Heart right ventricle (tissue), 16 donors: ENCODE measurements at regions of chr20 and their contacts with region 1.

Region 1: GRCh38 chr20:53547664-53548239 is 45.9 kb downstream of the ZNF217 start:
- DNase-seq: peak in 1 of 2 donors; percentile 45
- ATAC-seq: peak in 7 of 8 donors; percentile 70 to 85 (median 80)
- H3K4me3 ChIP-seq: no peak overlapping the region
- H3K27ac ChIP-seq: no peak overlapping the region
- H3K4me1 ChIP-seq: peaks cover 0 to 10% (median 7%) of the 10 kb centered on the region in 9 donors
- H3K27me3 ChIP-seq: no peaks in the 10 kb centered on the region
- CTCF ChIP-seq: peak; percentile 61 to 90 (median 81)

Region 2: DNA sequence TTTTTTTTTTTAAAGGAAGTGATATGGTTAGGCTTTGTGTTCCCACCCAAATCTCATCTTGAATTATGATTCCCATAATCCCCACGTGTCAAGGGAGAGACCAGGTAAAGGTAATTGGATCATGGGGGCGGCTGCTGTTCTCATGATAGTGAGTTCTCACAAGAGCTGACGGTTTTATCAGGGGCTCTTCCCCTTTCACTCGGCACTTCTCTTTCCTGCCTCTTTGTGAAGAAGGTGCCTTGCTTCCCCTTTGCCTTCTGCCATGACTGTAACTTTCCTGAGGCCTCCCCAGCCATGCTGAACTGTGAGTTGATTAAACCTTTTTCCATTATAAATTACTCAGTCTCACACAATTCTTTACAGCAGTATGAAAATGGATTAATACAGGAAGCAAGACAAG is 1420.4 kb before region 1 on chr20:
- intact Hi-C with region 1: loop called in 1 of 10 experiments (anchors 10 kb)
- DNase-seq: no peak
- ATAC-seq: no peak
- H3K4me3 ChIP-seq: no peak overlapping the region
- H3K27ac ChIP-seq: no peak overlapping the region
- H3K4me1 ChIP-seq: no peaks in the 10 kb centered on the region
- H3K27me3 ChIP-seq: no peaks in the 10 kb centered on the region
- CTCF ChIP-seq: no peak

Region 3: DNA sequence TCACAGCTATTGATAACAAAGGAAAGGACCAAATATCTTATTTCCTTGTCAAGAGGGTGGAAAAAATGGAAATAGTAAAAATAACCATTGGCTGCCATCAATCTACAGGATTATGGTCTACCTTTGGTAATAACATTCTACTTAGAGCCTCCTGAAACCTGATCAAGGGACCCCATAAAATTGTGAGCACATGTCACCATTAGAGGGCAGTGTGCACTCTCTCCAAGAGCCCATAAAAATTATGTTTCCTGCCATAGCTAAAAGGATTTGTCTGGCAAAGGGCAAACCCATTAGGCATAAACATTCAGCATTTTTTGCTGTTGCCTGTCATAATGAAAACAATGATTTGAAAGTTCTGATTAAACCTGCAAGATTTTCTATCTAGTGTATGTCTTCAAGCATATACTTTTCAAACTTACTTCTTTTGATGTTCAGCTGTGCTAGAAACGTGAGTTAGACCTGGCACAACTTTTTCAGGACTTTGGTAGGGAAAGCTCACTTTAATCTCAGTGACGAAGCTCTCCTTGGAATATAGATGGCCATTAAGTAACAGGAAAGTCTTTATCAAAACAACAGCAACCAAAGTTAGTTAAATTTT is 1235.5 kb before region 1 on chr20:
- intact Hi-C with region 1: loop called in 9 of 10 experiments (anchors 2 to 10 kb)
- DNase-seq: peak in 1 of 2 donors; percentile 40
- ATAC-seq: peak in 6 of 8 donors; percentile 44 to 67 (median 60)
- H3K4me3 ChIP-seq: no peak overlapping the region
- H3K27ac ChIP-seq: no peak overlapping the region
- H3K4me1 ChIP-seq: peaks cover 0 to 12% (median 3%) of the 10 kb centered on the region in 9 donors
- H3K27me3 ChIP-seq: peaks cover 0 to 5% (median 0%) of the 10 kb centered on the region in 7 donors
- CTCF ChIP-seq: peak; percentile 41 to 85 (median 76)

Region 4: DNA sequence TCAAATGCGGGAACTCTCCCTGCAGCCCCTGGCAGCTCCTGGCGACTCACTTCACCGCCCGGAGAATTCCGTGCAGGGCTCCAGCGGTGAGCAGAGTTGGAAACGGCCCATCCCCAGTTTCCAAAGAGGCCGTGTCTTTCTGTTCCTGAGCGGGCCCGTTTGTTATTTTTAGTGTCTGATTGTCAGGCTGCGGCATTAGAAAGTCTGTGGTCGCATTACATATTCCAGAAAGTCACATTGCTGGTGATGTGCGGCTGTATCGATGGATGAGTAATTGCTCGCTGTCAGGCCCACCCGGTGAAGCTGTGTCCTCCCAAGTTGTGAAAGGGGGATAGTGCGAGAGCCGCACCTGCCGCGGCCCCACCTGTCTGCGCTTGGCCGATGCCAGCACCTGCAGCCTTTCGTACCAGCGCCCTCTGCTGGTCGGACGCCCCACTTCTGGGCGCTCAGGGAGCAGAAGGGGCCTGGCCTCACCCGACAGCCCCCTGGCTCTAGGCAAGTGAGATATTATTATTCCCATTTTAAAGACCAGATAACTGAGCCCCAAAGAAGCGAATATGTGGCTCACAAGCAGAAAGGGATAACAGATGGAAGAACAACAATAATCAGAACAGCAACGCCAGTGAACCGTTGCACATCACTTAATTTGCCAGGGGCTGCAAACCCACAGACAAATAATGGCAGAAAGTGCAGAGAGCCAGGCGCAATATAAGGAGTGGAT is 330.7 kb before region 1 on chr20:
- intact Hi-C with region 1: loop called in 2 of 10 experiments (anchors 10 kb)
- DNase-seq: peak; percentile 57 to 74
- ATAC-seq: peak; percentile 61 to 89 (median 79)
- H3K4me3 ChIP-seq: peak overlapping the region in 5 of 10 donors; percentile 17 to 39 (median 32)
- H3K27ac ChIP-seq: no peak overlapping the region
- H3K4me1 ChIP-seq: peaks cover 0 to 9% (median 6%) of the 10 kb centered on the region in 9 donors
- H3K27me3 ChIP-seq: peaks cover 0 to 17% (median 0%) of the 10 kb centered on the region in 7 donors
- CTCF ChIP-seq: peak; percentile 79 to 94 (median 91)

Region 5: GRCh38 chr20:53238121-53238660 is 309.6 kb before region 1 on chr20:
- intact Hi-C with region 1: loop called in 1 of 10 experiments (anchors 10 kb)
- DNase-seq: no peak
- ATAC-seq: no peak
- H3K4me3 ChIP-seq: no peak overlapping the region
- H3K27ac ChIP-seq: no peak overlapping the region
- H3K4me1 ChIP-seq: no peaks in the 10 kb centered on the region
- H3K27me3 ChIP-seq: no peaks in the 10 kb centered on the region
- CTCF ChIP-seq: no peak

Region 6: GRCh38 chr20:53330601-53331140 is 217.1 kb before region 1 on chr20:
- intact Hi-C with region 1: no loop called
- DNase-seq: no peak
- ATAC-seq: no peak
- H3K4me3 ChIP-seq: no peak overlapping the region
- H3K27ac ChIP-seq: peak overlapping the region in 4 of 10 donors; percentile 28 to 76 (median 48)
- H3K4me1 ChIP-seq: peaks cover 0 to 37% (median 12%) of the 10 kb centered on the region in 9 donors
- H3K27me3 ChIP-seq: no peaks in the 10 kb centered on the region
- CTCF ChIP-seq: no peak